Caco-2 (cell line): ENCODE measurements at regions of chr6 and their contacts with region 1.

Region 1: GRCh38 chr6:71288228-71289001 is at the start of gene OGFRL1:
- DNase-seq: peak; percentile 70 to 79
- H3K4me3 ChIP-seq: peak within 1 kb of the TSS; percentile 74
- H3K4me3 Mint-ChIP-seq: peak within 1 kb of the TSS; percentile 74
- H3K27ac Mint-ChIP-seq: no peak within 1 kb of the TSS
- H3K4me1 ChIP-seq: peaks cover 23% of the 10 kb centered on the region
- H3K4me1 Mint-ChIP-seq: peaks cover 20% of the 10 kb centered on the region
- H3K27me3 ChIP-seq: no peaks in the 10 kb centered on the region
- H3K27me3 Mint-ChIP-seq: no peaks in the 10 kb centered on the region
- CTCF ChIP-seq: peak in 1 of 2 experiments; percentile 9
- total RNA-seq, gene OGFRL1: 5.7 and 6.9 TPM in 2 replicates

Region 2: GRCh38 chr6:70538376-70538775 is 750.0 kb before region 1 on chr6:
- CTCF ChIA-PET with region 1: no interaction called
- POLR2A ChIA-PET with region 1: no interaction called
- intact Hi-C with region 1: no loop called
- DNase-seq: no peak
- H3K4me3 ChIP-seq: no peak overlapping the region
- H3K4me3 Mint-ChIP-seq: no peak overlapping the region
- H3K27ac Mint-ChIP-seq: no peak overlapping the region
- H3K4me1 ChIP-seq: no peaks in the 10 kb centered on the region
- H3K4me1 Mint-ChIP-seq: no peaks in the 10 kb centered on the region
- H3K27me3 ChIP-seq: no peaks in the 10 kb centered on the region
- H3K27me3 Mint-ChIP-seq: no peaks in the 10 kb centered on the region
- CTCF ChIP-seq: no peak

Region 3: GRCh38 chr6:71268735-71269437 is 19.5 kb before region 1 on chr6:
- CTCF ChIA-PET with region 1: no interaction called
- POLR2A ChIA-PET with region 1: no interaction called
- intact Hi-C with region 1: no loop called
- DNase-seq: no peak
- H3K4me3 ChIP-seq: no peak overlapping the region
- H3K4me3 Mint-ChIP-seq: no peak overlapping the region
- H3K27ac Mint-ChIP-seq: no peak overlapping the region
- H3K4me1 ChIP-seq: no peaks in the 10 kb centered on the region
- H3K4me1 Mint-ChIP-seq: no peaks in the 10 kb centered on the region
- H3K27me3 ChIP-seq: no peaks in the 10 kb centered on the region
- H3K27me3 Mint-ChIP-seq: peaks cover 6% of the 10 kb centered on the region
- CTCF ChIP-seq: no peak

Region 4: DNA sequence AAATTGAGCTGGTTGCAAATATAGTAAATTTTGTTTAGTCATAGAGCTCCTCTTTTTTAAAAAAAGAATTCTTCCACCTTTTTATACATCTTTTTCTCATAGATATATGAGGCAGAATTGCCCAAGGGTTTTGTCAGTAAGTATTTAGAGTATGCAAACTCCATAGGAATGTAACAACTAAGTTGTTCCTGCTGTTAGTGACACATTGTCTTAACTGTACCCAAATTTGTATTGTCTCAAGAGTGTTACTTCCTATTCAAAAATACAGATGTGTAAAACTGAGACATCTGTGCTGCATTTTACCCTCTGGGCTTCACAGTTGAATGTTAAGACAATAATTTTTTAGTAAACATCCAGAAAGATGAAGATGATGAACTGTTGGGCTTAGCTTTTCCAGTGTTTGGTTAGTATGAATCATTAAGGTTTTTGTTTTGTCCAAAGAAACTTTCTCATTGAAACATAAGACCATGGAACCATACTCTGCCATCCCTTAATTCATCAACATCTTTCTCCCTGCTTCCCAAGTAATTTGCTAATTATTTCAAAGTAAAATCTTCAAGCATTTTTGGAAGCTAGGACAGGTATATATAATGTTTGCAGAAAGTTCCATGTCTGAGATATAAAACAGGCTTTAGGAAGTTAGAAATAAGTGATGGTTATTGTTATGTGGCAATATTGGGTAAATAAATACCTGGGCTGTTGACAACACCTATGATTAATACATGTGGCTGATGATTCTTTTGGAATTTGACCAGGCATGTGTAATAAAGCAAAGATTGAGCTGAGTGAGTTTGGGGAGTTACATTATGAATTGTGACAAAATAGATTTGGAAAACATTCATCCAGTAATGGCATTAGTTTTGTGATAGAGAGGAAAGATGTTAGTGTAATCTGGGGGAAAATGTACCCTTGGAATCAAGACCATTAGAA is 11.4 kb after region 1 on chr6:
- CTCF ChIA-PET with region 1: no interaction called
- POLR2A ChIA-PET with region 1: no interaction called
- intact Hi-C with region 1: loop called (anchors 2 kb)
- DNase-seq: no peak
- H3K4me3 ChIP-seq: no peak overlapping the region
- H3K4me3 Mint-ChIP-seq: no peak overlapping the region
- H3K27ac Mint-ChIP-seq: no peak overlapping the region
- H3K4me1 ChIP-seq: no peaks in the 10 kb centered on the region
- H3K4me1 Mint-ChIP-seq: no peaks in the 10 kb centered on the region
- H3K27me3 ChIP-seq: no peaks in the 10 kb centered on the region
- H3K27me3 Mint-ChIP-seq: no peaks in the 10 kb centered on the region
- CTCF ChIP-seq: no peak

Region 5: GRCh38 chr6:71349395-71349794 is 61.0 kb after region 1 on chr6:
- CTCF ChIA-PET with region 1: no interaction called
- POLR2A ChIA-PET with region 1: no interaction called
- intact Hi-C with region 1: loop called (anchors 5 kb)
- DNase-seq: no peak
- H3K4me3 ChIP-seq: no peak overlapping the region
- H3K4me3 Mint-ChIP-seq: no peak overlapping the region
- H3K27ac Mint-ChIP-seq: no peak overlapping the region
- H3K4me1 ChIP-seq: no peaks in the 10 kb centered on the region
- H3K4me1 Mint-ChIP-seq: no peaks in the 10 kb centered on the region
- H3K27me3 ChIP-seq: no peaks in the 10 kb centered on the region
- H3K27me3 Mint-ChIP-seq: peaks cover 15% of the 10 kb centered on the region
- CTCF ChIP-seq: peak; percentile 50 to 58